Psoas muscle (tissue), 8 donors: ENCODE measurements at regions of chr5 and their contacts with region 1.

Region 1: GRCh38 chr5:145825751-145826180 is 9.4 kb downstream of the PRELID2 start:
- DNase-seq: no peak
- ATAC-seq: peak in 1 of 4 donors; percentile 62
- H3K4me3 ChIP-seq: no peak overlapping the region
- H3K27ac ChIP-seq: no peak overlapping the region
- H3K4me1 ChIP-seq: no peaks in the 10 kb centered on the region
- H3K27me3 ChIP-seq: no peaks in the 10 kb centered on the region
- CTCF ChIP-seq: peak; percentile 73

Region 2: GRCh38 chr5:144203750-144204596 is 1621.8 kb before region 1 on chr5:
- intact Hi-C with region 1: loop called (anchors 5 to 10 kb)
- DNase-seq: no peak
- ATAC-seq: peak in 3 of 4 donors; percentile 37 to 87 (median 71)
- H3K4me3 ChIP-seq: no peak overlapping the region
- H3K27ac ChIP-seq: no peak overlapping the region
- H3K4me1 ChIP-seq: peaks cover 5% of the 10 kb centered on the region
- H3K27me3 ChIP-seq: peaks cover 0 to 20% (median 4%) of the 10 kb centered on the region in 3 donors
- CTCF ChIP-seq: peak; percentile 94

Region 3: GRCh38 chr5:145495741-145496140 is 330.0 kb before region 1 on chr5:
- intact Hi-C with region 1: loop called in 1 of 2 experiments (anchors 10 kb)
- DNase-seq: no peak
- ATAC-seq: peak in 3 of 4 donors; percentile 52 to 72 (median 56)
- H3K4me3 ChIP-seq: no peak overlapping the region
- H3K27ac ChIP-seq: no peak overlapping the region
- H3K4me1 ChIP-seq: no peaks in the 10 kb centered on the region
- H3K27me3 ChIP-seq: no peaks in the 10 kb centered on the region
- CTCF ChIP-seq: no peak

Region 4: GRCh38 chr5:145681686-145682085 is 144.1 kb before region 1 on chr5:
- intact Hi-C with region 1: loop called in 1 of 2 experiments (anchors 5 kb)
- DNase-seq: no peak
- ATAC-seq: peak; percentile 65 to 95 (median 84)
- H3K4me3 ChIP-seq: no peak overlapping the region
- H3K27ac ChIP-seq: no peak overlapping the region
- H3K4me1 ChIP-seq: peaks cover 8% of the 10 kb centered on the region
- H3K27me3 ChIP-seq: no peaks in the 10 kb centered on the region
- CTCF ChIP-seq: peak; percentile 65